ENCODE measurements at regions of chr1 and their contacts with region 1.

Region 1: DNA sequence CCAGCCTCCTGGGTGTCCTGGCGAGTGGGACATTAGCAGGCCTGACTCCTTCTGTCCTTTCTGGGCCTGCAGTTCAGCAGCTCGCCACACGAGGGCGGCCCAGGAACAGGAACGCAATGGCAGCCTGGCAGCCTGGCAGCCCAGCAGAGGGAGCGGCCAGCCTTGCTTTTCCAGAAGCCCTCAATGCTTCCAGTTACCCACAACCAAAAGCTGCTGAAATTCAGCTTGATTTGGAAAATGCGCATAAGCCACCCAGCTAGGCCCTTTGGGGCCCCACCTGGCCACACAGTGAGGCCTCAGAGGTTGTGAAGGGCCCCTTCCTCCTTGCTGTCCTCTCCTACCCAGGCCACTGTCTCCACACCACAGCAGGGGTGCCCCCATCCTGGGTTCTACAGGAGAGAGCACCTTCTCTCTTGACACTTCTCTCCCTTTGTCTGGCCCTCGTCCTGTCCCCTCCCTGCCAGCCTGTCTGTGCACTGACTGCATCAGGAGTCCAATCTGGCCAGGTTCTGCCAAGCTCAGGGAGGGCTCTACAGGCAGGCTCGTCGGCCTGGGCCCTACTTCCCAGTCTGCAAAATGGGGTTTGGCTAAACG is 103.4 kb upstream of the VAMP3 start:
- DNase-seq: peak; percentile 64 to 69 (median 66)
- H3K4me3 ChIP-seq: no peak overlapping the region
- H3K4me3 Mint-ChIP-seq: no peak overlapping the region
- H3K27ac ChIP-seq: no peak overlapping the region
- H3K27ac Mint-ChIP-seq: no peak overlapping the region
- H3K4me1 ChIP-seq: no peaks in the 10 kb centered on the region
- H3K4me1 Mint-ChIP-seq: peaks cover 7% of the 10 kb centered on the region
- H3K27me3 ChIP-seq: peaks cover 0 to 4% of the 10 kb centered on the region in 2 donors
- H3K27me3 Mint-ChIP-seq: peaks cover 6 to 14% (median 9%) of the 10 kb centered on the region in 3 donors
- CTCF ChIP-seq: peak; percentile 98

Region 2: DNA sequence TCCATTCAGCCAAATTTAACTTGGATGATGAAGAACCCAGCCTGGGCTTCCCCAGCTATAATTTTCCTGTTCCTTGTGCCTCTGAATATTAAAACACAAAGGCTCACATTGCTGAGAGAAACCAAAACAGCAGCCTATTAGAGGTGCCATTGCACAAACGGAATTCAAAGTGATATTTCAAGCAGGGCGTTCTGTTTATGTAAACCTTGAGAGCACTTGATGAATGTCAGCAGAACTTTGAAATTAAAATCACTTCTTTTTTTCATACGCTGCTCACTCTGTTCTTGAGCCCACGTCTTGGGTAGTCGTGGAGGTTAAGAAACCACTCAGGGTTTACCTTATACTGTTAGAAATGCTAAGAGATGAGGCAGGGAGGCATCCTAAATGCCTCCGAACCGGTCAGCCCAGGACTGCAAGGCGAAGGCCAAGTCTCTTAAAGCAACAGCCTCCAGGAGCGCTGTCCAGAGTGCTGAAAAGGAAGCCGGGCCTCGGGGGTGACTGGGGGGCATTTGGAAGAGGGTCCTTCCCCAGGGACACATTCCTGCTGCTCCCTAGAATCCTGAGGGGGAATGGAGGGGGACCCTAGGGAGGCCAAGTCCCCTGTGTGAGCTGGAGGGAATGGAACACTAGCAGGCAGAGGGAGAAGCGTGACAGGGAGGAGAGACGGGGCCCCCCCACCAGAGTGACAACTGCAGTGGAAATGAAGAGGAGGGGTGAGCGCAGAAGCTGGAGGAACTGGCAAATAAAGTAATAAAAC is 51.5 kb before region 1 on chr1:
- intact Hi-C with region 1: no loop called
- DNase-seq: no peak
- H3K4me3 ChIP-seq: no peak overlapping the region
- H3K4me3 Mint-ChIP-seq: no peak overlapping the region
- H3K27ac ChIP-seq: no peak overlapping the region
- H3K27ac Mint-ChIP-seq: no peak overlapping the region
- H3K4me1 ChIP-seq: no peaks in the 10 kb centered on the region
- H3K4me1 Mint-ChIP-seq: no peaks in the 10 kb centered on the region
- H3K27me3 ChIP-seq: no peaks in the 10 kb centered on the region
- H3K27me3 Mint-ChIP-seq: peaks cover 2 to 6% (median 5%) of the 10 kb centered on the region in 3 donors
- CTCF ChIP-seq: no peak

Region 3: GRCh38 chr1:7752512-7753417 is 85.0 kb after region 1 on chr1:
- intact Hi-C with region 1: loop called (anchors 1 to 2 kb)
- DNase-seq: peak; percentile 25 to 60 (median 44)
- H3K4me3 ChIP-seq: peak overlapping the region in 2 of 3 experiments; percentile 30 to 48
- H3K4me3 Mint-ChIP-seq: peak overlapping the region; percentile 28 to 70
- H3K27ac ChIP-seq: no peak overlapping the region
- H3K27ac Mint-ChIP-seq: peak overlapping the region in 3 of 7 donors; percentile 15 to 56 (median 42)
- H3K4me1 ChIP-seq: peaks cover 17 to 22% of the 10 kb centered on the region in 2 donors
- H3K4me1 Mint-ChIP-seq: peaks cover 22% of the 10 kb centered on the region
- H3K27me3 ChIP-seq: no peaks in the 10 kb centered on the region
- H3K27me3 Mint-ChIP-seq: no peaks in the 10 kb centered on the region
- CTCF ChIP-seq: peak; percentile 93

Region 4: DNA sequence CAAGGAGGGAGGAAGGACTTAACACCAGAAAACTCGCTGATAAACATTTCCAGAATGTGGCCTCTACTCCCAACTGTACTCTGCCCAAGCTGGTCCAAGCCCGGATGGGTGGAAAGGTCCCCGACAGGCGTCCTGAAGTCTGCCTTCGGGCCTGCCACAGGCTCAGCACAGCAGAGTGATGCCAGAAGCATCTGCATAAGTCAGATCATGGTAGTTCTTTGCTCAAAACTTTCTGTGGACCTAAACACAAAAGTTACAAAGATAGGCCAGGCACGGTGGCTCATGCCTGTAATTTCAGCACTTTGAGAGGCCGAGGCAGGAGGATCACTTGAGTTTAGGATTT is 185.9 kb after region 1 on chr1:
- intact Hi-C with region 1: loop called in 1 of 2 experiments (anchors 2 kb)
- DNase-seq: no peak
- H3K4me3 ChIP-seq: no peak overlapping the region
- H3K4me3 Mint-ChIP-seq: no peak overlapping the region
- H3K27ac ChIP-seq: no peak overlapping the region
- H3K27ac Mint-ChIP-seq: no peak overlapping the region
- H3K4me1 ChIP-seq: peaks cover 4 to 10% of the 10 kb centered on the region in 2 donors
- H3K4me1 Mint-ChIP-seq: peaks cover 5% of the 10 kb centered on the region
- H3K27me3 ChIP-seq: no peaks in the 10 kb centered on the region
- H3K27me3 Mint-ChIP-seq: peaks cover 2 to 14% (median 10%) of the 10 kb centered on the region in 3 donors
- CTCF ChIP-seq: no peak

Region 5: DNA sequence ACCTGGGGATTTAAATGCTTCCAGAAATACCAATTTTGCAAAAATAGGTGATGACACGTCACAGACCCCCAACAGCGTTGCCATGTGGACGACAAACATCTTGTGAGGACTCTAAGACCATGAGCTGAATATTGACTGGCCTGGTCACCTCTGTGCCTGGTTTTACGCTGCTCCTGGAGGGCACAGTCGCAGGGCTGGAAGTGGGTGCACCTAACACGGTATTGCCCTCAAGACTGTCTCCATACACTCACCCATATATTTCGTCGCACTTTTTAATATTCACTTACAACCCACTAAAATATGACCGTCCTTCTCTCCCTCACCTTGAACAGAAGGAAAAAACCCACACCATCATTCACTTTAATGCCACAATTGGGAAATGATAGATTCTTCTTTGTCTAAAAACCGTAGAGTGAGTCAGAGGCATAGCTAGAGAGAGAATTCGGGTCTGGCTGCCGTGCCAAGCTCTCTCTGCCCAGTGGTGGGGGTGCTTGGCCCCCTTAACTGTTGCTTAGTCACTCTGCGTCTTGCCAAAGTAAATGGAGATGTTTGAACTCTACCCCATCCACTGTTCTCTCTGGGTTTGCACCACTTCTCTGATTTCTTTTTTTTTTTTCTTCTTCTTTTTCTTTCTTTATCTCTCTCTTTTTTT is 225.9 kb after region 1 on chr1:
- intact Hi-C with region 1: loop called in 1 of 2 experiments (anchors 10 kb)
- DNase-seq: no peak
- H3K4me3 ChIP-seq: no peak overlapping the region
- H3K4me3 Mint-ChIP-seq: no peak overlapping the region
- H3K27ac ChIP-seq: no peak overlapping the region
- H3K27ac Mint-ChIP-seq: no peak overlapping the region
- H3K4me1 ChIP-seq: no peaks in the 10 kb centered on the region
- H3K4me1 Mint-ChIP-seq: no peaks in the 10 kb centered on the region
- H3K27me3 ChIP-seq: peaks cover 0 to 2% of the 10 kb centered on the region in 2 donors
- H3K27me3 Mint-ChIP-seq: peaks cover 10 to 15% (median 13%) of the 10 kb centered on the region in 3 donors
- CTCF ChIP-seq: no peak

Region 6: GRCh38 chr1:7902478-7903085 is 234.9 kb after region 1 on chr1:
- intact Hi-C with region 1: loop called (anchors 2 to 10 kb)
- DNase-seq: peak; percentile 47 to 72 (median 67)
- H3K4me3 ChIP-seq: peak overlapping the region in 1 of 3 experiments; percentile 50
- H3K4me3 Mint-ChIP-seq: peak overlapping the region; percentile 68 to 80
- H3K27ac ChIP-seq: no peak overlapping the region
- H3K27ac Mint-ChIP-seq: peak overlapping the region in 3 of 7 donors; percentile 26 to 59 (median 30)
- H3K4me1 ChIP-seq: peaks cover 5 to 10% of the 10 kb centered on the region in 2 donors
- H3K4me1 Mint-ChIP-seq: peaks cover 17% of the 10 kb centered on the region
- H3K27me3 ChIP-seq: no peaks in the 10 kb centered on the region
- H3K27me3 Mint-ChIP-seq: peaks cover 2 to 7% (median 5%) of the 10 kb centered on the region in 3 donors
- CTCF ChIP-seq: peak; percentile 69

Region 7: DNA sequence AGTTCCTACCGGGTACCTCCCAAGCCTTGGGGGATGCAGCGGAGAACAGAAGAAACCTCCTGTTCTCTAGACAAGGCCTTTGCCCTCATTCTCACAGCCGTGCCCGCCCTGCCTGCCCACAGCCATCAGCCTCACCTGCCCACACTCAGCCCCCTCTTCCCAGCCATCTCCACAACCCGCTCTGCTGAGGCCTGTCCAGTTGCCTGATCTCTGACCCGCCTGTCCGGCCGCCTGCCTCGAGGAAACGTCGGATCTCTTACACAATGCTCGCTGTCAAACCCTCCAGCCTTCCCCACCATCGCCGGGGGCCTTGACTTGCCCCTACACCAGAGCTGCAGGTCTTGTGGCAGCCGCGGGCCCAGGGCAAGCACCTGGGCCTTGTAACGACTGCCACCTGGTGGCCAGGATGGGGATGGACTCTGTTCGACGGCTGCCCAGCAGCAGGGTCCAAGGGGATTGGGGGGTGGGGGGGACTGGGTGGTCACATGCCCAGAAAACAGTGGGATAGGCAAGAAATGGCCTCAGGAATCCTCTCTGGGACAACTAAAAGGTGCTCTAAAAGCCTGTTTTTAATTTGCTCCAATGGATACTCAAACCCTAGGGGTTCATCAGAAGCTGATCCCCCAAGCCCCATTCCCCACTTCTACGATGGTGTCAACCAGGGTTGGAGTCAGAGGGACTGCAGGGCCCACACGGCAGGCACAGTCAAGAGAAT is 681.2 kb after region 1 on chr1:
- intact Hi-C with region 1: loop called in 1 of 2 experiments (anchors 2 kb)
- DNase-seq: peak; percentile 48 to 62 (median 58)
- H3K4me3 ChIP-seq: no peak overlapping the region
- H3K4me3 Mint-ChIP-seq: no peak overlapping the region
- H3K27ac ChIP-seq: no peak overlapping the region
- H3K27ac Mint-ChIP-seq: peak overlapping the region in 2 of 7 donors; percentile 5 to 64
- H3K4me1 ChIP-seq: no peaks in the 10 kb centered on the region
- H3K4me1 Mint-ChIP-seq: peaks cover 2% of the 10 kb centered on the region
- H3K27me3 ChIP-seq: no peaks in the 10 kb centered on the region
- H3K27me3 Mint-ChIP-seq: peaks cover 1 to 7% (median 6%) of the 10 kb centered on the region in 3 donors
- CTCF ChIP-seq: peak; percentile 88